ENCODE measurements at regions of chr3 and their contacts with region 1.

Region 1: GRCh38 chr3:9843715-9844438 is at the start of gene RPUSD3:
- DNase-seq: peak; percentile 98 to 99
- ATAC-seq: peak; percentile 99 to 100 (median 99)
- H3K4me3 ChIP-seq: peak within 1 kb of the TSS; percentile 99
- H3K4me3 Mint-ChIP-seq: peak within 1 kb of the TSS; percentile 99
- H3K27ac ChIP-seq: peak within 1 kb of the TSS; percentile 68
- H3K27ac Mint-ChIP-seq: peak within 1 kb of the TSS; percentile 96
- H3K4me1 ChIP-seq: peaks cover 18% of the 10 kb centered on the region
- H3K4me1 Mint-ChIP-seq: peaks cover 22 to 24% of the 10 kb centered on the region in 2 donors
- H3K27me3 ChIP-seq: no peaks in the 10 kb centered on the region
- H3K27me3 Mint-ChIP-seq: no peaks in the 10 kb centered on the region
- CTCF ChIP-seq: no peak
- total RNA-seq, gene RPUSD3: 27.5 to 43.9 (median 30.9) TPM

Region 2: GRCh38 chr3:9890249-9891071 is 46.6 kb after region 1 on chr3 and contains the start of gene JAGN1:
- intact Hi-C with region 1: loop called (anchors 5 kb)
- DNase-seq: peak; percentile 90 to 95
- ATAC-seq: peak; percentile 90 to 94 (median 93)
- H3K4me3 ChIP-seq: peak within 1 kb of the TSS; percentile 100
- H3K4me3 Mint-ChIP-seq: peak within 1 kb of the TSS; percentile 99
- H3K27ac ChIP-seq: peak within 1 kb of the TSS; percentile 100
- H3K27ac Mint-ChIP-seq: peak within 1 kb of the TSS; percentile 98 to 100
- H3K4me1 ChIP-seq: peaks cover 17% of the 10 kb centered on the region
- H3K4me1 Mint-ChIP-seq: peaks cover 37 to 50% of the 10 kb centered on the region in 2 donors
- H3K27me3 ChIP-seq: no peaks in the 10 kb centered on the region
- H3K27me3 Mint-ChIP-seq: no peaks in the 10 kb centered on the region
- CTCF ChIP-seq: no peak
- total RNA-seq, gene JAGN1: 15.4 to 16.6 (median 15.5) TPM